Activated CD4-positive, alpha-beta T cell treated with anti-CD3 and anti-CD28 coated beads for 36 hours (primary cell): ENCODE measurements at regions of chr15 and their contacts with region 1.

Region 1: DNA sequence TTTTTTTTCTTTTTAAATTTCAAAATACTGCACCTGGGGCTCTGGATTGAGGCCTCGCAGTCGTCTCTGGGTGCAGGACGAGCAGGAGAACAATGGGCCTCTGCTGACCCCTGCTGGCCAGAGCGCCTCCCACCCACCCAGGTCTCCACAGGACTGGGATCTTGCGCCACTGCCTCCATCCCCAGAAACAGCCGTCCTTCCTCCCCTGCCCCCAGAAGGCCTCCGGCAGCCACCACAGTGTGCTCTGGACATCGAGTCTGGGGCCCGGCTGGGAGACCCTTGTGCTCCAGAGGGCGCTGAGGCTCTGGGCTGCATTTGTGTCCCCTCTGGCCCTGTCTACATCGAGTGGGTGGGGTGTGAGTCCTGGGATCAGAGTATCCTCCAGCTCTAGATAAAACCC is 6.6 kb upstream of the ACSBG1 start:
- DNase-seq: peak; percentile 93
- ATAC-seq: peak; percentile 96
- H3K4me3 Mint-ChIP-seq: no peak overlapping the region
- H3K27ac Mint-ChIP-seq: no peak overlapping the region
- H3K4me1 Mint-ChIP-seq: no peaks in the 10 kb centered on the region
- H3K27me3 Mint-ChIP-seq: no peaks in the 10 kb centered on the region

Region 2: GRCh38 chr15:77907824-77908751 is 332.9 kb before region 1 on chr15:
- CTCF ChIA-PET with region 1: interaction called, 4 read pairs
- POLR2A ChIA-PET with region 1: no interaction called
- intact Hi-C with region 1: loop called (anchors 1 to 2 kb)
- DNase-seq: peak; percentile 86
- ATAC-seq: peak; percentile 83
- H3K4me3 Mint-ChIP-seq: no peak overlapping the region
- H3K27ac Mint-ChIP-seq: no peak overlapping the region
- H3K4me1 Mint-ChIP-seq: no peaks in the 10 kb centered on the region
- H3K27me3 Mint-ChIP-seq: peaks cover 7% of the 10 kb centered on the region

Region 3: GRCh38 chr15:77966540-77967290 is 274.3 kb before region 1 on chr15:
- CTCF ChIA-PET with region 1: interaction called, 5 read pairs
- POLR2A ChIA-PET with region 1: no interaction called
- intact Hi-C with region 1: loop called in 1 of 2 experiments (anchors 2 kb)
- DNase-seq: peak; percentile 71
- ATAC-seq: peak; percentile 75
- H3K4me3 Mint-ChIP-seq: no peak overlapping the region
- H3K27ac Mint-ChIP-seq: no peak overlapping the region
- H3K4me1 Mint-ChIP-seq: no peaks in the 10 kb centered on the region
- H3K27me3 Mint-ChIP-seq: peaks cover 2% of the 10 kb centered on the region

Region 4: GRCh38 chr15:78177447-78177873 is 63.5 kb before region 1 on chr15:
- CTCF ChIA-PET with region 1: interaction called, 14 read pairs
- POLR2A ChIA-PET with region 1: no interaction called
- intact Hi-C with region 1: loop called in 1 of 2 experiments (anchors 1 kb)
- DNase-seq: peak; percentile 68
- ATAC-seq: peak; percentile 69
- H3K4me3 Mint-ChIP-seq: no peak overlapping the region
- H3K27ac Mint-ChIP-seq: no peak overlapping the region
- H3K4me1 Mint-ChIP-seq: peaks cover 20% of the 10 kb centered on the region
- H3K27me3 Mint-ChIP-seq: no peaks in the 10 kb centered on the region

Region 5: DNA sequence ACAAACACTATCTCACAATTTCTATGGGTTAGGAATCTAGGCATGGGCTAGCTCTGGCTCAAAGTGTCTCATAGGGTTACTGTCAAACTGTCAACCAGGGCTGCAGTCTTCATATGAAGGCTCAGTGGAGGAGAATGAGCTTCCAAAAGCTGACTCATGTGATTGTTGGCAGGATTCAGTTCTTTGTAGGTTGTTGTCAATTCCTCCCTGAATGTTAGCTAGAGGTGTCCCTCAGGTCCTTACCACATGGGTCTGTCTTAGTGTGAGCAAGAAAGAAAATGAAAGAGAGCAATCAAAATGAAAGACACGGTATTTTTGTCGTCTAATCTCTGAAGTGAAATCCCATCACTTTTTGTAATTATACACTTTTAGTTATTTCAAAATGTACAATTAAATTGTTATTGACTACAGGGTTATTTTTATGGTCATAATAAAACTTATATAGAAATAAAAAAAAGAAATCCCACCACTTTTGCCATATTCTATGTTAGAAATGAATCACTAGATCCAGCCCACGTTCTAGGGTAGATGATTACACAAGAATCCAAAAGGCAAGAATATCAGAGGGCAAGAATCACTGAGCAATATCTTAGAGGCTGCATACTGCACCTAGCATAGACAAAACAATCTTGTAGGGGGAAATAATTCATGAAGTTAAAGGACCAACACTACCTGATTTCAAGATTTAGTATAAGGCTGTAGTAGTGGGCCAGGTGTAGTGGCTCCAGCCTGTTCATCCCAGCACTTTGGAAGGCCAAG is 15.0 kb before region 1 on chr15:
- CTCF ChIA-PET with region 1: interaction called, 28 read pairs
- POLR2A ChIA-PET with region 1: interaction called, 5 read pairs
- intact Hi-C with region 1: no loop called
- DNase-seq: peak; percentile 18
- ATAC-seq: peak; percentile 98
- H3K4me3 Mint-ChIP-seq: no peak overlapping the region
- H3K27ac Mint-ChIP-seq: no peak overlapping the region
- H3K4me1 Mint-ChIP-seq: peaks cover 14% of the 10 kb centered on the region
- H3K27me3 Mint-ChIP-seq: no peaks in the 10 kb centered on the region